Naive thymus-derived CD4-positive, alpha-beta T cell (primary cell): ENCODE measurements at regions of chr7 and their contacts with region 1.

Region 1: DNA sequence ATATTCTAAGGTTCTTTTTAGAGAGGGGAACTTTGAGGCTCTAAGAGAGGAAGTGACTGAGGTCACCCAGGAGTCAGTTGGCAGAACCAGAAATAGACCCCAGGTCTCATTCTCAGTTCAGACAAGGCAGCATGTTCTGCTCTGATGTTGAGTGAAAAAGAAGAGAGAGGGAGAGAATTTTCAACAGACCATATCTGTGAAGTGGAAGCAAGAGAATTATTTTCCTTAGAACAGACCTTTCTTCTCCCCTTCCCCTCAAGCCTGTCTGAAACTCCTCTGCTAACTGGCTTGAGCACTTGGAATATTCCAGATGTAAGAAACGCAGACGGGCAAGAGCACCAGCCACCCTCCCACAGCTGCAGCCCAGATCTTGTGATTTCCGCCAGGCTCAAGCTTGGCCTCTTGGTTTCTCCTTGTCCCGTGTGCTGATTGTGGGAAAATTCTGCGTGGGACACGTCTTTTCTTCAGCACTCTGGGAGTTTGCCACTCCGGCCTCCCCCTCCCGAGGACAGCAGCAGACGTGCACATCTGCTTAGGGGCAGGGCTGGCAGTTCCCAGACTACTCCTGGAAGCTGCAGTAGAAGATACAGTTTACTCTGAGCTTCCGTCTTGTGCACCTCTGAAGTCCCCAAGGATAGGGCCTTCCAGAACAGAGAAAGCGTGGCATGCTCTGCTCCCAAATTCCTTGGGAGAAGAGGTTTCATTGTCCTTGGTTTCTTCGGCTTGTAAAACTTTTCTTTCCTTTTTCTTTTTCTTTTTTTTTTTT is 22.7 kb upstream of the IKZF1 start:
- DNase-seq: peak in 1 of 9 donors; percentile 34
- ATAC-seq: peak; percentile 83
- H3K4me3 ChIP-seq: peak overlapping the region; percentile 32
- H3K4me3 Mint-ChIP-seq: peak overlapping the region; percentile 65 to 84 (median 75)
- H3K27ac ChIP-seq: peak overlapping the region; percentile 67
- H3K27ac Mint-ChIP-seq: peak overlapping the region; percentile 61 to 95 (median 91)
- H3K4me1 ChIP-seq: peaks cover 19 to 29% of the 10 kb centered on the region in 2 donors
- H3K4me1 Mint-ChIP-seq: peaks cover 31 to 75% (median 66%) of the 10 kb centered on the region in 7 donors
- H3K27me3 ChIP-seq: no peaks in the 10 kb centered on the region
- H3K27me3 Mint-ChIP-seq: no peaks in the 10 kb centered on the region

Region 2: GRCh38 chr7:50293509-50294179 is 11.8 kb after region 1 on chr7:
- CTCF ChIA-PET with region 1: interaction called, 4 read pairs
- POLR2A ChIA-PET with region 1: interaction called, 1,000 read pairs
- intact Hi-C with region 1: loop called in 1 of 2 experiments (anchors 1 kb)
- DNase-seq: no peak
- ATAC-seq: no peak
- H3K4me3 ChIP-seq: no peak overlapping the region
- H3K4me3 Mint-ChIP-seq: no peak overlapping the region
- H3K27ac ChIP-seq: no peak overlapping the region
- H3K27ac Mint-ChIP-seq: peak overlapping the region in 1 of 9 donors; percentile 26
- H3K4me1 ChIP-seq: peaks cover 0 to 9% of the 10 kb centered on the region in 2 donors
- H3K4me1 Mint-ChIP-seq: peaks cover 15 to 65% (median 43%) of the 10 kb centered on the region in 7 donors
- H3K27me3 ChIP-seq: no peaks in the 10 kb centered on the region
- H3K27me3 Mint-ChIP-seq: peaks cover 0 to 7% (median 0%) of the 10 kb centered on the region in 5 donors

Region 3: GRCh38 chr7:50298811-50299562 is 17.1 kb after region 1 on chr7:
- CTCF ChIA-PET with region 1: no interaction called
- POLR2A ChIA-PET with region 1: interaction called, 1,000 read pairs
- intact Hi-C with region 1: loop called in 1 of 2 experiments (anchors 2 kb)
- DNase-seq: no peak
- ATAC-seq: no peak
- H3K4me3 ChIP-seq: no peak overlapping the region
- H3K4me3 Mint-ChIP-seq: peak overlapping the region in 1 of 10 donors; percentile 4
- H3K27ac ChIP-seq: peak overlapping the region; percentile 32
- H3K27ac Mint-ChIP-seq: peak overlapping the region in 7 of 9 donors; percentile 23 to 96 (median 91)
- H3K4me1 ChIP-seq: peaks cover 0 to 41% of the 10 kb centered on the region in 2 donors
- H3K4me1 Mint-ChIP-seq: peaks cover 30 to 80% (median 67%) of the 10 kb centered on the region in 7 donors
- H3K27me3 ChIP-seq: no peaks in the 10 kb centered on the region
- H3K27me3 Mint-ChIP-seq: peaks cover 0 to 8% (median 0%) of the 10 kb centered on the region in 5 donors

Region 4: DNA sequence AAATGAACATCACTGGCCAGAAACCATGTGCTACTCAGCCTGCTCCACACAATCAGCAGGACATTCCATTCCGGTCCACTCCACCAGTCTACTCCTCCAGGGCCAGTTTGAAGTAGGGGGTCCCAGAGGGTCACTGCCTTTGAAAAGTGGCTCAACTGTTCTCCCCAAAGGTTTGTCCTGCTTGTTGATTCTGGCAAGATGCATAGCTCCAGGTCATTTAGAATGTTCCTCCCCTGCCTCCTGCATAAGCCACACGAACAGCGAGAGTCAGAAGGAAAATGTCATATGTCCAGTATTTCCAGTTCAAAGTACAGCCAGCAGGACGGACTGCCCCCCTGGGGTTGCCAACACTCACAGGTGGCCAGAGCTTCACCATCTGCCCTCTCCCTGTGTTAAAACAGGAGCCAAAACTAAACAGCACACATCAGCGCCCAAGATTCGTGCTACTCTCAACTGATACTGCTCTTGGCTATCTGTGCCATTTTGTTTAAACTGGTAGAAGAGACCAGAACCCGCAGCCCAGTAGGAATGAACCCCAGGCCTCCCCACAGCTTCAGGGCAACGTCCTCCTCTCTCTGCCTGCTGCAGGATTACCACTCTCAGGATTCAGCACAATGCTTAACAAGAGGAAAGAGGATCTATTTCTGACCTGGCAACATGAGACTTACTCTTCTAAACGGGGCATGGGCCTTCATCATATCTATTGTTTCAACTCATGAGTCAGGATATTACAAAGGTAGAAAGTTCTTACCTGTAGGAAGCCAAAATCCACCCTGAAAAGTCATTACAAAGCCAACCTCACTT is 489.5 kb after region 1 on chr7:
- CTCF ChIA-PET with region 1: no interaction called
- POLR2A ChIA-PET with region 1: no interaction called
- intact Hi-C with region 1: no loop called
- DNase-seq: no peak
- ATAC-seq: no peak
- H3K4me3 ChIP-seq: no peak overlapping the region
- H3K4me3 Mint-ChIP-seq: no peak overlapping the region
- H3K27ac ChIP-seq: no peak overlapping the region
- H3K27ac Mint-ChIP-seq: peak overlapping the region in 1 of 9 donors; percentile 60
- H3K4me1 ChIP-seq: no peaks in the 10 kb centered on the region
- H3K4me1 Mint-ChIP-seq: peaks cover 0 to 12% (median 0%) of the 10 kb centered on the region in 7 donors
- H3K27me3 ChIP-seq: no peaks in the 10 kb centered on the region
- H3K27me3 Mint-ChIP-seq: peaks cover 0 to 4% (median 0%) of the 10 kb centered on the region in 5 donors